Vagina (tissue), 2 donors: ENCODE measurements at regions of chr2 and their contacts with region 1.

Region 1: DNA sequence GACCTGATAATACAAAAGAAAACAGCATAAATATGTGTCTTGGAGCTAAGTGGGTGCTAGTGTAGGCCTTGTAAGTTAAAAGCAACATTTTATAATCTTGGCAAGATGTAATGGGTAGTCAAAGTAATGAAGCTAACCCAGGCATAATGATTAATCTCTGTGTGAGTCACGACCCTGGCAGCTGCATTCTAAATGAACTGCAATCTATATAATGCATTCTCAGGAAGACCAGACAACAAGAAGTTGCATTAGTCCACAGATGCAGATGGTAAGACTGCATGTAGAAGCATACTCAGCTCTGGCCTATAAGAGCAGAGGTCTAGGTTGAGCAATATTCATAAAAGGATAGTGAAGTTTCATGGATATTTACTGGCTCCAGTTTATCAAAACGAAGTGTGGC is 85.6 kb upstream of the ETAA1 start:
- DNase-seq: no peak
- H3K4me3 ChIP-seq: no peak overlapping the region
- H3K27ac ChIP-seq: no peak overlapping the region
- H3K4me1 ChIP-seq: peaks cover 13% of the 10 kb centered on the region
- H3K27me3 ChIP-seq: no peaks in the 10 kb centered on the region
- CTCF ChIP-seq: no peak
- POLR2A ChIP-seq: no peak

Region 2: GRCh38 chr2:66429071-66429477 is 882.5 kb before region 1 on chr2:
- intact Hi-C with region 1: loop called (anchors 10 kb)
- DNase-seq: no peak
- H3K4me3 ChIP-seq: no peak overlapping the region
- H3K27ac ChIP-seq: peak overlapping the region; percentile 23
- H3K4me1 ChIP-seq: peaks cover 15% of the 10 kb centered on the region
- H3K27me3 ChIP-seq: no peaks in the 10 kb centered on the region
- CTCF ChIP-seq: peak; percentile 56 to 91 (median 87)
- POLR2A ChIP-seq: no peak